CD8-positive, alpha-beta T cell (primary cell): ENCODE measurements at regions of chr1 and their contacts with region 1.

Region 1: GRCh38 chr1:66446261-66447001 is 87.5 kb upstream of the SGIP1 start:
- DNase-seq: peak in 6 of 9 experiments; percentile 14 to 86 (median 31)
- ATAC-seq: peak; percentile 74
- H3K4me3 ChIP-seq: peak overlapping the region in 1 of 2 experiments; percentile 12
- H3K4me3 Mint-ChIP-seq: peak overlapping the region; percentile 66
- H3K27ac ChIP-seq: peak overlapping the region; percentile 47 to 73
- H3K27ac Mint-ChIP-seq: peak overlapping the region; percentile 95
- H3K4me1 ChIP-seq: peaks cover 20% of the 10 kb centered on the region
- H3K4me1 Mint-ChIP-seq: peaks cover 23% of the 10 kb centered on the region
- H3K27me3 ChIP-seq: no peaks in the 10 kb centered on the region
- H3K27me3 Mint-ChIP-seq: no peaks in the 10 kb centered on the region
- CTCF ChIP-seq: peak; percentile 90

Region 2: DNA sequence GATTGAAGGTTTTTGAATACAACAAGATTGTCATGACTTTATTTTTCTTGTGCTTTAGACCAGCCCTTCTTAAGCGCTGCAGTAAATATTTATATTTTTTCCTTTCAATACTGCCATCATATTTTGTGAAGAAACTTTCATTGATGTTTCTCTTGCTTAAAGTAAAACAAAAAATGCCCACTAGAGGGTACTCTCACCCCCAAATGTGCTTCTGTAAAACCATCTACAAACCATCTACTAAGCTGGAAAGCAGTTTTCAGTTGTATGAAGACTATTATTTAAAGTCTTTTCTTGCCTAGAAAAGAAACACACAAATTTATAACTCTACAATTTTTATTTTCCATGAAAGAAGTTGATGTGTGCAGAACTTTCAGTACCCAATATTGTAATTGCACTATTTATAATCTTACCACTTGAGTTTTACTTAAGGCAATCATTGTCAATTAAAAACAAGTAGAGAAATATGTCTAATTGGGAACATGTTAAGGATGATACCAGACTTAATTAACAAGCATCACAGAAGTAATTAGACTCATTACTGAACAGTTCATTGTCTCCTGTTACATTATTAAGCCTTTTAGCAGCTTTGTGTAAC is 1015.2 kb before region 1 on chr1:
- CTCF ChIA-PET with region 1: no interaction called
- POLR2A ChIA-PET with region 1: no interaction called
- intact Hi-C with region 1: loop called (anchors 5 to 10 kb)
- DNase-seq: peak in 2 of 9 experiments; percentile 38 to 45
- ATAC-seq: peak; percentile 55
- H3K4me3 ChIP-seq: no peak overlapping the region
- H3K4me3 Mint-ChIP-seq: no peak overlapping the region
- H3K27ac ChIP-seq: no peak overlapping the region
- H3K27ac Mint-ChIP-seq: no peak overlapping the region
- H3K4me1 ChIP-seq: no peaks in the 10 kb centered on the region
- H3K4me1 Mint-ChIP-seq: no peaks in the 10 kb centered on the region
- H3K27me3 ChIP-seq: no peaks in the 10 kb centered on the region
- H3K27me3 Mint-ChIP-seq: no peaks in the 10 kb centered on the region
- CTCF ChIP-seq: peak; percentile 70

Region 3: DNA sequence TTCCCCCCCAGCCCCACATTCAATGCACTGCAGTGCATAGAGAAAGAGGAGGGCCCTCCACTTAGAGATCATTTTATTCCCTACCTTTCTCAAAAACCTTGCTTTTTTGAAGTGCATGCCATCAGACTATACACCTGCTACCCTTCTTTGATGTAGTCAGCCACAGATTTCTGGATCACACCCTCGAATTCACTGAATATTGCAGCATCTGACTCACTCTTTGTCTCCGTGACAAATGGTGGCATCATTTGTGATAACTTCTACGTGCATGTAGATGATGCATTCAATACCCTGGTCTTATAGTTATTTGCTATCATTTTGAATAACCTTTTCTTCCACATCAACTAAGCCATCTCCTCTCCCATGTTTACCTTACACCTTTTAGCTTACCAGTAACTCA is 222.8 kb before region 1 on chr1:
- CTCF ChIA-PET with region 1: interaction called, 11 read pairs
- POLR2A ChIA-PET with region 1: no interaction called
- intact Hi-C with region 1: no loop called
- DNase-seq: no peak
- ATAC-seq: no peak
- H3K4me3 ChIP-seq: no peak overlapping the region
- H3K4me3 Mint-ChIP-seq: no peak overlapping the region
- H3K27ac ChIP-seq: no peak overlapping the region
- H3K27ac Mint-ChIP-seq: no peak overlapping the region
- H3K4me1 ChIP-seq: no peaks in the 10 kb centered on the region
- H3K4me1 Mint-ChIP-seq: no peaks in the 10 kb centered on the region
- H3K27me3 ChIP-seq: no peaks in the 10 kb centered on the region
- H3K27me3 Mint-ChIP-seq: peaks cover 4% of the 10 kb centered on the region
- CTCF ChIP-seq: no peak

Region 4: GRCh38 chr1:66282343-66282852 is 164.0 kb before region 1 on chr1:
- CTCF ChIA-PET with region 1: interaction called, 35 read pairs
- POLR2A ChIA-PET with region 1: interaction called, 4 read pairs
- intact Hi-C with region 1: loop called in 1 of 2 experiments (anchors 1 kb)
- DNase-seq: peak in 7 of 9 experiments; percentile 16 to 89 (median 54)
- ATAC-seq: peak; percentile 93
- H3K4me3 ChIP-seq: no peak overlapping the region
- H3K4me3 Mint-ChIP-seq: no peak overlapping the region
- H3K27ac ChIP-seq: peak overlapping the region in 1 of 2 experiments; percentile 13
- H3K27ac Mint-ChIP-seq: peak overlapping the region; percentile 84
- H3K4me1 ChIP-seq: peaks cover 55% of the 10 kb centered on the region
- H3K4me1 Mint-ChIP-seq: peaks cover 89% of the 10 kb centered on the region
- H3K27me3 ChIP-seq: no peaks in the 10 kb centered on the region
- H3K27me3 Mint-ChIP-seq: no peaks in the 10 kb centered on the region
- CTCF ChIP-seq: peak; percentile 35

Region 5: DNA sequence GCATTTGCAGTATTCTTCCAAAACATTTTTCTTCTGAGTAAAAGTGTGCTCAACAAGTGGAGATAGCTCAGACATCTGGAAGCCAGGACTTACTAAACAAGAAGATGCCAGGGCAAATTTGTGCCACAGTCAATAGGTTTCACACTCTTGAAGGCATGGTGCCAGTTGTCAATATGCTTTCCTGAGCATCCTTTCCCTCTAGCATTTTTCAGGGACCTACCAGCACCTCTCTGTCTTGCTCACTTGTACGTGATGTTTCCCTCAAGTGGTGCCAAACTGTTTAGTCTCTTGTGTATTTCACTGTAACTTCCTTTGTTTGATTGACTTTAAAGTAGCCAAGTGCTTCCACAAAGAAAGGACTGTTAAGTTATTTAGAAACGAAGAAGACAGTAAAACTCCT is 106.5 kb before region 1 on chr1:
- CTCF ChIA-PET with region 1: interaction called, 20 read pairs
- POLR2A ChIA-PET with region 1: interaction called, 11 read pairs
- intact Hi-C with region 1: loop called in 1 of 2 experiments (anchors 1 kb)
- DNase-seq: peak in 2 of 9 experiments; percentile 24 to 48
- ATAC-seq: no peak
- H3K4me3 ChIP-seq: no peak overlapping the region
- H3K4me3 Mint-ChIP-seq: peak overlapping the region; percentile 54
- H3K27ac ChIP-seq: no peak overlapping the region
- H3K27ac Mint-ChIP-seq: peak overlapping the region; percentile 22
- H3K4me1 ChIP-seq: peaks cover 67% of the 10 kb centered on the region
- H3K4me1 Mint-ChIP-seq: peaks cover 80% of the 10 kb centered on the region
- H3K27me3 ChIP-seq: no peaks in the 10 kb centered on the region
- H3K27me3 Mint-ChIP-seq: no peaks in the 10 kb centered on the region
- CTCF ChIP-seq: no peak

Region 6: DNA sequence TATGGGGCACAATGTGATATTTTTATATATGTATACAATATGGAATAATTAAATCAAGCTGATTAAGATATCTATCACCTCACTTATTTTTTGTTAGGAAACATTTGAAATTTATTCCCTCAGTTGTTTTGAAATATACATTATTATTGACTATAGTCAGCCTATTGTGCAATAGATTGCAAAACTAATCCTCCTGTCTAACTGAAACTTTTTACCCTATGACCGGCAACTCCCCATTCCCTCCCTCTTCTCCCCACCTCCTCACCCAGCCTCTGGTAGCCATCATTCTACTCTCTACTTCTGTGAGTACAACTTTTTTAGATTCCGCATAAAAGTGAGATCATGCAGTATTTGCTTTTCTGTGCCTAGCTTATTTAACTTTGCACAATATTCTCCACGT is 30.1 kb before region 1 on chr1:
- CTCF ChIA-PET with region 1: interaction called, 12 read pairs
- POLR2A ChIA-PET with region 1: interaction called, 3 read pairs
- intact Hi-C with region 1: no loop called
- DNase-seq: no peak
- ATAC-seq: no peak
- H3K4me3 ChIP-seq: no peak overlapping the region
- H3K4me3 Mint-ChIP-seq: no peak overlapping the region
- H3K27ac ChIP-seq: no peak overlapping the region
- H3K27ac Mint-ChIP-seq: no peak overlapping the region
- H3K4me1 ChIP-seq: no peaks in the 10 kb centered on the region
- H3K4me1 Mint-ChIP-seq: peaks cover 3% of the 10 kb centered on the region
- H3K27me3 ChIP-seq: no peaks in the 10 kb centered on the region
- H3K27me3 Mint-ChIP-seq: no peaks in the 10 kb centered on the region
- CTCF ChIP-seq: no peak

Region 7: DNA sequence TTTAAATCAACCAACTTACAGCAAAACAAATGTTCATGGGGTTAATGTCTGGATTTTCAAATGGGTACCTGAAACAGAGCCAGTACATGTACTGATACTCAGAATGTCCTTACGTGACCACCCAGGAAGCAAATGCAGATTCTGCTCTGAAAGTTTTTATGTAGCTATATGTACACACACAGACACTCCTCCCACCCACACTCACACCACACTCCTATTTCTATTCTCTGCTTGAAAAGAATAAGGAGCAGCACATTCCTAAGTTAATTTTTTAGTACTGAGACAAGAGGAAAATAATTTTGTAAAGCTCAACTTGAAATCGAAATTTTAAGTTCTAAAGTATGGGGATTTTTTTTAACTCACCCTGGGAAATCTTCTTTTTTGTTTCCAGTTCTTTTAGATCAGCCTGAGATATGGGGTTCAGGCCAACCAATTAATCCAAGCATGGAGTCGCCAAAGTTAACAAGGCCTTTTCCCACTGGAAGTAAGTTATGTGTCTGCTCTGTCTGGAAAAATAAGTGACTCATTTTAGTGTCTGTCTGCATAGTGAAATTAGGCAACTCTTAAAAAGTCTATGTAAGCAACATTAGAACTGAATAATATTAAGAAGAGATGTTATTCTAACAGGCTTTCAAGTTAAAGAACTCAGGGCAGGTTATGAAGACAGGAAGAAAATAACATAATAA is 230.3 kb after region 1 on chr1:
- CTCF ChIA-PET with region 1: no interaction called
- POLR2A ChIA-PET with region 1: no interaction called
- intact Hi-C with region 1: no loop called
- DNase-seq: no peak
- ATAC-seq: no peak
- H3K4me3 ChIP-seq: no peak overlapping the region
- H3K4me3 Mint-ChIP-seq: no peak overlapping the region
- H3K27ac ChIP-seq: no peak overlapping the region
- H3K27ac Mint-ChIP-seq: no peak overlapping the region
- H3K4me1 ChIP-seq: no peaks in the 10 kb centered on the region
- H3K4me1 Mint-ChIP-seq: no peaks in the 10 kb centered on the region
- H3K27me3 ChIP-seq: no peaks in the 10 kb centered on the region
- H3K27me3 Mint-ChIP-seq: no peaks in the 10 kb centered on the region
- CTCF ChIP-seq: no peak